B cell (primary cell): ENCODE measurements at regions of chr1 and their contacts with region 1.

Region 1: DNA sequence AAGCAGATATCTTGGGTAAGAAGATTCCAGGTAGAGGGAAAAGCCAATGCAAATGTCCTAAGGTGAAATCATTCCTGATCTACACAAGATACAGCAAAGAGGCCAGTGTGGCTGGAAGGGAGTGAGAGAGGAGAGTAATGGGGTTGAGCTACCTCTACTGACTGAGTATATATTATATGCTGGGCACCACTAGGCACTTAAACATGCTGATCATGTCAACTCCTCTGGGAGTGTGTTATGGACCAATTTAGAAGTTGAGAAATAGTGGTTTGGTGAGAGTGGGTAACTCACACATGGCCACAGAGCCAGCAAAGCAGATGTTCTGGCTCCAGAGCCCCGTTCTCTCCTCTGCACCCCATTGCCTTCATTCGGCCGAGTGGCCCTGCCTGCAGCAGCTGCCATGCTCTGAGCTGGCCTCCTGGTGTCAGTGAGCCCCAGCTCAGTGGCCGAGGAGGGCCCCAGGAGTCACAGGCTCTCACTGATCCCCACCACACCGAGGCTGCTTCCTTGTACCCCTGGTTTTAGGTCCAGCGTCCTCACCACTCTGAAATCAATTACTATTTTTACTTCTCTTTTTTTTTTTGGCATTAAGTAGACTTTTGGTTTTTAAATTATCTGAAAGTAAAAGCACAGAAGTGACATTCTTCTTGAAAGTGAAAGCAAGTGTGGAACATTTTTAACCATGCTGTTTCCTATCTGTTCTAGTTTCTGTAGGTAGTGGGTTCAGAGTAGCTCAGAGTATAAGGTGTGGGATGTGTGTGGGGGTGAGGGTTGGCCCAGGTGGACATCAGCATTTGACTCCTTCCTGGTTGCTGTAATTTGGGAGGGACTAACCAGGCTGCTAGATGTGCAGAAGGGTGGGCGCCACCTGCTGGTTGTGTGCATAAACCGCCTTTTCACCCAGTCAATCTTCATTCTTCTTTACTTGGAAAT is 45.8 kb upstream of the CRNN start:
- DNase-seq: peak; percentile 84
- ATAC-seq: peak; percentile 70
- H3K4me3 ChIP-seq: peak overlapping the region in 3 of 5 experiments; percentile 26 to 48 (median 39)
- H3K4me3 Mint-ChIP-seq: peak overlapping the region; percentile 87
- H3K27ac ChIP-seq: peak overlapping the region; percentile 65 to 80
- H3K27ac Mint-ChIP-seq: peak overlapping the region; percentile 97
- H3K4me1 ChIP-seq: peaks cover 14 to 20% of the 10 kb centered on the region in 2 donors
- H3K4me1 Mint-ChIP-seq: peaks cover 25% of the 10 kb centered on the region
- H3K27me3 ChIP-seq: peaks cover 0 to 2% (median 0%) of the 10 kb centered on the region in 4 experiments
- H3K27me3 Mint-ChIP-seq: peaks cover 3% of the 10 kb centered on the region
- CTCF ChIP-seq: peak; percentile 82

Region 2: GRCh38 chr1:151909150-151910149 is 550.4 kb before region 1 on chr1 and contains the start of gene THEM4:
- CTCF ChIA-PET with region 1: no interaction called
- POLR2A ChIA-PET with region 1: no interaction called
- intact Hi-C with region 1: no loop called
- DNase-seq: peak; percentile 92
- ATAC-seq: peak; percentile 99
- H3K4me3 ChIP-seq: peak within 1 kb of the TSS; percentile 8 to 82 (median 70)
- H3K4me3 Mint-ChIP-seq: peak within 1 kb of the TSS; percentile 92
- H3K27ac ChIP-seq: peak within 1 kb of the TSS; percentile 54 to 70
- H3K27ac Mint-ChIP-seq: peak within 1 kb of the TSS; percentile 86
- H3K4me1 ChIP-seq: peaks cover 7 to 17% of the 10 kb centered on the region in 2 donors
- H3K4me1 Mint-ChIP-seq: peaks cover 11% of the 10 kb centered on the region
- H3K27me3 ChIP-seq: no peaks in the 10 kb centered on the region
- H3K27me3 Mint-ChIP-seq: no peaks in the 10 kb centered on the region
- CTCF ChIP-seq: peak; percentile 20
- total RNA-seq, gene THEM4: 16.1 and 19.8 TPM in 2 replicates

Region 3: DNA sequence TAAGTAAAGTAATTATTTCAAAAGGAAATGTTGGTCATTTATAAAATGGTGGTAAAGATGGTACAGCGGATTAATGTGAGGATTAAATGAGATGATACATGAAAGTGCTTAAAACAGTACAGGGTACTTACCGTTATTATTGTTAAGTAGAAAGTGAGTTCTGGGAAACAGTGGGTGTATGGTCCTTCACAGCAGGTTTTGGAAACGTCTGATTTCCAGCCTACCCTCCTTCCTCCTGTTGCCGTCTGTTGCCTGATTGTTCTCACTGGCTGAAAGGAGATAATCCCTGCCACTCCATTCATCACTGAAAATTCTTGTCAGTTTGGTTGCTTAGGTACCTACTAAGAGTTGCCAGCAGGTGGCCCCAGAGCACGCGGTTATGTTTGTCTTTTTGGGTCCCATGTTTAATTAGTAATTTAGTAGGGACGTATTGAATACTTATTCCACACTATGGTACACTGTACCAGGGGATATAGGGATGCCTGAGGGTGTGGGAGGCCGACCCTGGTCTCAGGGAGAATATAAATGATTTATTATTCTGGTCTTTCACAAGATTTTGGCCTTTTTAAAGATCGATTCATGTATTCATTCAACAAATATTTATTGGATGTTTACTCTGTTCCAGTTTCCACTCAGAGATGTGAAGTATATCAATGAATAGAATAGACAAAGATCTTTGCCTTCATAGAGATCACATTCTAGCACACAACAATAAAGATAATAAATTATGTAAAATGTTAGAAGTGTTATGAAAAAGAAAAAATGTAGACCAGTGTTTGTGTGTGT is 270.0 kb before region 1 on chr1:
- CTCF ChIA-PET with region 1: interaction called, 130 read pairs
- POLR2A ChIA-PET with region 1: no interaction called
- intact Hi-C with region 1: loop called (anchors 1 kb)
- DNase-seq: peak; percentile 76
- ATAC-seq: peak; percentile 63
- H3K4me3 ChIP-seq: peak overlapping the region in 4 of 5 experiments; percentile 53 to 61 (median 58)
- H3K4me3 Mint-ChIP-seq: peak overlapping the region; percentile 79
- H3K27ac ChIP-seq: no peak overlapping the region
- H3K27ac Mint-ChIP-seq: peak overlapping the region; percentile 42
- H3K4me1 ChIP-seq: peaks cover 7 to 11% of the 10 kb centered on the region in 2 donors
- H3K4me1 Mint-ChIP-seq: peaks cover 6% of the 10 kb centered on the region
- H3K27me3 ChIP-seq: peaks cover 0 to 9% (median 0%) of the 10 kb centered on the region in 4 experiments
- H3K27me3 Mint-ChIP-seq: peaks cover 10% of the 10 kb centered on the region
- CTCF ChIP-seq: peak; percentile 88

Region 4: GRCh38 chr1:152398812-152399698 is 60.8 kb before region 1 on chr1:
- CTCF ChIA-PET with region 1: interaction called, 22 read pairs
- POLR2A ChIA-PET with region 1: no interaction called
- intact Hi-C with region 1: no loop called
- DNase-seq: peak; percentile 12
- ATAC-seq: no peak
- H3K4me3 ChIP-seq: no peak overlapping the region
- H3K4me3 Mint-ChIP-seq: no peak overlapping the region
- H3K27ac ChIP-seq: no peak overlapping the region
- H3K27ac Mint-ChIP-seq: no peak overlapping the region
- H3K4me1 ChIP-seq: no peaks in the 10 kb centered on the region
- H3K4me1 Mint-ChIP-seq: no peaks in the 10 kb centered on the region
- H3K27me3 ChIP-seq: peaks cover 0 to 11% (median 3%) of the 10 kb centered on the region in 4 experiments
- H3K27me3 Mint-ChIP-seq: peaks cover 24% of the 10 kb centered on the region
- CTCF ChIP-seq: no peak

Region 5: GRCh38 chr1:152448095-152448494 is 11.8 kb before region 1 on chr1:
- CTCF ChIA-PET with region 1: interaction called, 39 read pairs
- POLR2A ChIA-PET with region 1: no interaction called
- intact Hi-C with region 1: no loop called
- DNase-seq: no peak
- ATAC-seq: no peak
- H3K4me3 ChIP-seq: no peak overlapping the region
- H3K4me3 Mint-ChIP-seq: no peak overlapping the region
- H3K27ac ChIP-seq: no peak overlapping the region
- H3K27ac Mint-ChIP-seq: no peak overlapping the region
- H3K4me1 ChIP-seq: no peaks in the 10 kb centered on the region
- H3K4me1 Mint-ChIP-seq: no peaks in the 10 kb centered on the region
- H3K27me3 ChIP-seq: peaks cover 0 to 3% (median 0%) of the 10 kb centered on the region in 4 experiments
- H3K27me3 Mint-ChIP-seq: peaks cover 4% of the 10 kb centered on the region
- CTCF ChIP-seq: no peak